Heart left ventricle (tissue), 16 donors: ENCODE measurements at regions of chr16 and their contacts with region 1.

Region 1: GRCh38 chr16:73047518-73048291 is at the start of gene ZFHX3:
- DNase-seq: peak; percentile 72 to 85 (median 82)
- ATAC-seq: peak; percentile 33 to 79 (median 73)
- H3K4me3 ChIP-seq: peak within 1 kb of the TSS; percentile 64 to 98 (median 82)
- H3K27ac ChIP-seq: peak within 1 kb of the TSS; percentile 87 to 97 (median 91)
- H3K4me1 ChIP-seq: peaks cover 6 to 89% (median 58%) of the 10 kb centered on the region in 12 donors
- H3K27me3 ChIP-seq: no peaks in the 10 kb centered on the region
- CTCF ChIP-seq: peak in 6 of 12 donors; percentile 9 to 48 (median 34)
- POLR2A ChIP-seq: peak in 1 of 2 donors; percentile 26
- total RNA-seq, gene ZFHX3: 7.8 to 21.6 (median 14.5) TPM

Region 2: GRCh38 chr16:72913377-72914096 is 134.2 kb before region 1 on chr16:
- intact Hi-C with region 1: no loop called
- DNase-seq: no peak
- ATAC-seq: no peak
- H3K4me3 ChIP-seq: no peak overlapping the region
- H3K27ac ChIP-seq: no peak overlapping the region
- H3K4me1 ChIP-seq: peaks cover 0 to 7% (median 0%) of the 10 kb centered on the region in 12 donors
- H3K27me3 ChIP-seq: no peaks in the 10 kb centered on the region
- CTCF ChIP-seq: no peak
- POLR2A ChIP-seq: no peak

Region 3: DNA sequence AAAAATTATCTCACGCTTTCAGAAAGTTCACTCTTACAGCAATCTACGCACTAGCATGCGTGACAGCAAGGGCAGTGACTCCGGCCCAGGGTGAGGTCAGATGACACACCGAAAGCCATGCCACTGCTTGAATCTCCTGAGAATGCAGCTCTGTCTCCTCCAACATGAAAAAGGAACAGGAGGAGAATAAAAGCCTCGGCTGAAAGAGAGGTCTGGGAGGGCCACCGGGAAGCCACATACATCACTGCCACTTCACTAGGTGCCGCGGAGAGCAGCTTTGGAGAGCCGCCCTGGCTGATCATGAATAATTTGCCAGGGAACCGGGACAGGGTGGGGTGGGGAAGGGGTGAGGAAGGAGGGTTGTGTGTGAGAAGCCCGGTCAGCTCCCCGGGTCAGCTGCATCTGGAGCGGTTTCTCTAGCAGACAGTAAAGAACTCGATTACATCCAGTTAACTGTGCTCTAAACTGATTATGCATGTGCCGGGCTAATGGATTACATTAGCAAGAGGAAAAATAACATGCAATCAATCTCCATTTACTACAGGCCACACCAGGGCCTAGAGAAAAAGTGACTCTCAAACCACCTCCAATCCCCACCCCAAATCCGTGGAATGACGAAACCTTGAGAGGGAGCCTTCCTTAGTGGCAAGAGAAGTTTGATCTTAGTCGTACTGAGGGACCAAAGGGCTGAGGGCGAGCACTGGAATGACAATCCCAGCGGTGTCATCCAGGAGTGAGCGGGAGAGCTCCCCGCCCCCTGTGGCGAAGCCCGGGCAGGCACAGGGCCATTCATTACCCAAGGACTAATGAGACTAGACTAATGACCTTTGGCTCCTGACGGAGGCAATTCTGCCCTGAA is 100.1 kb before region 1 on chr16:
- intact Hi-C with region 1: loop called in 1 of 10 experiments (anchors 10 kb)
- DNase-seq: peak in 1 of 5 donors; percentile 47
- ATAC-seq: peak in 2 of 4 donors; percentile 30 to 40
- H3K4me3 ChIP-seq: no peak overlapping the region
- H3K27ac ChIP-seq: peak overlapping the region in 10 of 12 donors; percentile 32 to 75 (median 55)
- H3K4me1 ChIP-seq: peaks cover 2 to 34% (median 22%) of the 10 kb centered on the region in 12 donors
- H3K27me3 ChIP-seq: no peaks in the 10 kb centered on the region
- CTCF ChIP-seq: no peak
- POLR2A ChIP-seq: no peak

Region 4: DNA sequence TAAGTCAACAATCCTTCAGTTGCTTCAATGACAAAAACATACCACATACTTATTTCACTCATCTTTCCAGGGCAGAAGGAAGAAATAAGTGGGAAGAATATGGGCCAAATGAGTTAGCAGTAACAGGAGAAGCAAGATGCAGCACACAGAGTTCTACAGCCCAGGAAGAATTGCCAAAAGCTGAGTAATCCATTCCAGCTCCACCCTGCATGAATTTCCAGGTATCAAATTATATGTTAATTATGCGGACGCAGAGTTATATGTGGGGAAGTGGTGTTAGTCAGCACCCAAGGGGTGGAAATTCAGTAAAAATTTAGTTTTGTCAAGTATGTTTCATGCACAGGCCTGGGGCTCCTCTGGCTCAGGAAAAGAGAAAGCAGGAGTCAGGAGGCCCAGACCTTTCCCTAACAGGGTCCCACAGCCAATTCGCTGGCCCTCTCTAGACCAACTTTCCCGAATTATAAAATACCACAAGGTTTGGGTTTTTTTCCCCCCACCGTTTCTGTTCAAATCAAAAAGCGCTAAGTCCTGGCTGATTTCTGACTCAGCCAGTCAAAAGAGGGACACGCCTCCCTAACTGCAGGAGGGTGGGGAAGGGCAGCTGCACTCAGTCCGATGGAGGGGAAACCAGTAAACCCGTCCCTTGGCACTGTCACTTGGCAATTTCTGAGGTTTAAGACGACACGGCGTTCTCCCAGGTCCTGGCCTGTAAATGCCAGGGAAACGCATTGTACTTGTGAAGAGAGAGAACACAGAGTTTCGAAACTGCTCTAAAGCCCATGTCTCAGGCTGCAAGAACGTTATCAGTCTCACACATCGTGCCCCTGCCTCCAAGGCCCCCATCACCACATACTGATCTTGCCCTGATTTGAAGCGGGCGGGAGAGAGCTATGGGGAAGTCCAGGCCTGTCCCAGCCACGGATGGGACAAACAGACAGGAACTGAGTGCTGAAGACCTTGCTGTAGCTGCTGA is 57.8 kb before region 1 on chr16:
- intact Hi-C with region 1: loop called in 3 of 10 experiments (anchors 5 to 10 kb)
- DNase-seq: peak in 4 of 5 donors; percentile 33 to 74 (median 50)
- ATAC-seq: peak; percentile 42 to 72 (median 62)
- H3K4me3 ChIP-seq: peak overlapping the region in 5 of 12 donors; percentile 6 to 30 (median 12)
- H3K27ac ChIP-seq: peak overlapping the region; percentile 11 to 82 (median 68)
- H3K4me1 ChIP-seq: peaks cover 20 to 90% (median 68%) of the 10 kb centered on the region in 12 donors
- H3K27me3 ChIP-seq: no peaks in the 10 kb centered on the region
- CTCF ChIP-seq: no peak
- POLR2A ChIP-seq: no peak

Region 5: GRCh38 chr16:73027685-73028111 is 20.0 kb before region 1 on chr16:
- intact Hi-C with region 1: loop called in 1 of 10 experiments (anchors 2 kb)
- DNase-seq: no peak
- ATAC-seq: no peak
- H3K4me3 ChIP-seq: no peak overlapping the region
- H3K27ac ChIP-seq: no peak overlapping the region
- H3K4me1 ChIP-seq: peaks cover 8 to 89% (median 40%) of the 10 kb centered on the region in 12 donors
- H3K27me3 ChIP-seq: no peaks in the 10 kb centered on the region
- CTCF ChIP-seq: no peak
- POLR2A ChIP-seq: no peak

Region 6: DNA sequence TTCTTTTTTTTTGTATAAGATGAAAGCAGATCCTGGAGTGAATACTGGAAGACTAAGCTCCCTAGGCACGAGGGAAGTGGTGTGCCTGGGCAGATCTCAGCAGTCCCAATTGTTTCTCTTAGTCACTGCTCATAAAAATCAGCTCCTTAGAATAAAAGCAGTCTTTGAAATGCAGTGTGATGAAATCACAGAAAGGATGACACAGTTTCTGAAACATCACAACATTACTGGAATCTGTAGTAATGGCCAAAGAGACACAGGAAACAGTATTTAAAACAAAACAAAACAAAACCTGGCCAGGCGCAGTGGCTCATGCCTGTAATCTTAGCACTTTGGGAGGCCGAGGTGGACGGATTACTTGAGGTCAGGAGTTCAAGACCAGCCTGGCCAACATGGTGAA is 34.9 kb after region 1 on chr16:
- intact Hi-C with region 1: no loop called
- DNase-seq: peak in 1 of 5 donors; percentile 30
- ATAC-seq: peak in 2 of 4 donors; percentile 53 to 81
- H3K4me3 ChIP-seq: no peak overlapping the region
- H3K27ac ChIP-seq: peak overlapping the region in 2 of 12 donors; percentile 32 to 47
- H3K4me1 ChIP-seq: peaks cover 0 to 18% (median 0%) of the 10 kb centered on the region in 12 donors
- H3K27me3 ChIP-seq: no peaks in the 10 kb centered on the region
- CTCF ChIP-seq: no peak
- POLR2A ChIP-seq: no peak